ENCODE measurements at regions of chr12 and their contacts with region 1.

Region 1: GRCh38 chr12:112130441-112130998 is 5.2 kb downstream of the TRAFD1 start:
- DNase-seq: no peak
- ATAC-seq: peak; percentile 73
- H3K4me3 Mint-ChIP-seq: peak overlapping the region; percentile 51
- H3K27ac Mint-ChIP-seq: peak overlapping the region; percentile 91
- H3K4me1 Mint-ChIP-seq: peaks cover 56% of the 10 kb centered on the region
- H3K27me3 Mint-ChIP-seq: no peaks in the 10 kb centered on the region

Region 2: DNA sequence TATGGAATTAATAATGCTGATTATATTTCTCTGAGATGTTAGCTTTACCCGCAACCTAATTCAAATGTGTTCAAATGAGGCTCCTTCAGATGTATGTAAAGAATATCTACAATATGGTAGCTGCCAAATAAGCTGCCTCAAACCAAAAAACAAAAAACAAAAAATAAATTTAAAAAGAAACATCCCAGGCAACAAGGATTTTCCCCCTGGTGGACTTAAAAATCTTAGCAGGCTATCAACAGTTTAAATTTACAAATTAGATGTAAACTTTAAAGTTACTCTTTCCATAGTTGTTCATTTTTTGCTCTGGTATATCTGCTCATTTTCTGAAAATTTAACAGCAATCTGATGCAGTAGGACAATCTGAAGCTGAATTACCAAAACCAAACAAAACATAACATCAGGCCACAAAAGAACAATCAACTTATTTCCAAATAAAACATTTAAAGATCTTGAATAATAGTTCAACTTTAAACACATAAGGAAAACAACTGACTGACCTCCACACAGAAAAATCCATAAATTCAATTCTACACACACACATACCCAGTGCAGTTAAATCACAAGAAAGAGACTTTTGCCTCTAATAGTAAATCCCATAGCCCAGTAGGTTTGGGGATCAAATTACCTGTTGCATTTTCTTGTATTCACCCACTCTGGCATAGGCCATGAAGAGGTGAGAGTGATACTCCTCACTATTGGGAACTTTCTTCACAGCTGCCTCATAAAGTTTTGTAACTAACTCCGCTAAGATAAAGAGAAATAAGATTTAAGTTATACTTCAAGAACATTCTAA is 43.3 kb before region 1 on chr12:
- CTCF ChIA-PET with region 1: interaction called, 3 read pairs
- POLR2A ChIA-PET with region 1: interaction called, 3 read pairs
- intact Hi-C with region 1: loop called in 1 of 2 experiments (anchors 1 kb)
- DNase-seq: no peak
- ATAC-seq: no peak
- H3K4me3 Mint-ChIP-seq: no peak overlapping the region
- H3K27ac Mint-ChIP-seq: peak overlapping the region; percentile 67
- H3K4me1 Mint-ChIP-seq: peaks cover 25% of the 10 kb centered on the region
- H3K27me3 Mint-ChIP-seq: no peaks in the 10 kb centered on the region

Region 3: GRCh38 chr12:112096667-112097066 is 33.9 kb before region 1 on chr12:
- CTCF ChIA-PET with region 1: interaction called, 5 read pairs
- POLR2A ChIA-PET with region 1: interaction called, 9 read pairs
- intact Hi-C with region 1: loop called (anchors 1 kb)
- DNase-seq: peak; percentile 47
- ATAC-seq: peak; percentile 96
- H3K4me3 Mint-ChIP-seq: peak overlapping the region; percentile 35
- H3K27ac Mint-ChIP-seq: peak overlapping the region; percentile 93
- H3K4me1 Mint-ChIP-seq: peaks cover 48% of the 10 kb centered on the region
- H3K27me3 Mint-ChIP-seq: no peaks in the 10 kb centered on the region

Region 4: DNA sequence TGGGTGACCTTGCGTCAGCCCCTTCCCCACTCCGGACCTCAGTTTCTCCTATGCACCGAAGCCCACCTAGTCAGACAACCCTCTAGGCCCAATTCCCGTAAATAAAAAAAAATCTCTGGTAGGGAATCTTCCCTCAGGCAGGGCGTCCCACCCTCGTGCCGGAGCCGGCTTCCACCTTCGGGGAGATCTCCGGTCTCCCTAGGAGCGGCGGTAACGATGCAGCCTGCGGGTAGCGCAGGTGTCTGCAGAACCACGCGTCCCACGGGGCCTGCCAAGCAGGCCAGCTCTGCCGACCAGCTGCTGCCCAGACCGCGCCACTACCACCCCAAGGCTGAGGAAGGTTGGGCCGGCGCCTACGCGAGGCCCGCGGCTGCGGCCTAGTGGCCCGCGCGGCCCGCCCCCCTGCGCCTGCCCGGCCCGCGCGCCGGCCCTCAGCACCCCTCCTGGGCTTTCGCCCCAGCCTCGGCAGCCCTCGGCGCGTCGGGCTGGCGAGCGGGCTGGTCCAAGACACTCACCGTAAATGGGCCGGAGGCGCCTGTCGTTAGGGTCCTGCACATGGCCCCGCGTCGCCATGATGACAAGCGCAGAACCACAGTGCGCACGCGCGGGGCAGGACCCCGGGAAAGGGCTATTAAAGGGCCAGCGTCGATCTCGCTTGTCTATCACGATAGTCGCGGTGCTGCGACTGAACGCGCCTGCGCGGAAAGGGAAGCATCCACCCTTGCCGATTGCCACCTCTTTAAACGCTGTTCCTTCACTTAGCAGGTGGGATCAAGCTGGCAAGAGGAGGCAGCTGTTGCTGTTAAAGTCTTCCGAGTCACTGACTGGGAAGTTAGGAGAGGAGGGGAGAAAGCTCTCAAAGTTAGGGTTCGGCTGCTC is 22.1 kb before region 1 on chr12 and contains the start of gene NAA25:
- CTCF ChIA-PET with region 1: interaction called, 10 read pairs
- POLR2A ChIA-PET with region 1: interaction called, 20 read pairs
- intact Hi-C with region 1: loop called (anchors 1 kb)
- DNase-seq: peak; percentile 94
- ATAC-seq: peak; percentile 80
- H3K4me3 Mint-ChIP-seq: peak within 1 kb of the TSS; percentile 97
- H3K27ac Mint-ChIP-seq: peak within 1 kb of the TSS; percentile 99
- H3K4me1 Mint-ChIP-seq: peaks cover 55% of the 10 kb centered on the region
- H3K27me3 Mint-ChIP-seq: no peaks in the 10 kb centered on the region
- total RNA-seq, gene NAA25: 50.9 to 58.5 TPM

Region 5: GRCh38 chr12:112606611-112607365 is 476.3 kb after region 1 on chr12:
- CTCF ChIA-PET with region 1: no interaction called
- POLR2A ChIA-PET with region 1: no interaction called
- intact Hi-C with region 1: no loop called
- DNase-seq: no peak
- ATAC-seq: no peak
- H3K4me3 Mint-ChIP-seq: no peak overlapping the region
- H3K27ac Mint-ChIP-seq: no peak overlapping the region
- H3K4me1 Mint-ChIP-seq: no peaks in the 10 kb centered on the region
- H3K27me3 Mint-ChIP-seq: peaks cover 25% of the 10 kb centered on the region